HCT116 (cell line): ENCODE measurements at regions of chr2 and their contacts with region 1.

Region 1: GRCh38 chr2:58571181-58571852 is 330.2 kb upstream of the FANCL start:
- DNase-seq: peak; percentile 77
- ATAC-seq: peak; percentile 100
- H3K4me3 ChIP-seq: no peak overlapping the region
- H3K27ac ChIP-seq: no peak overlapping the region
- H3K4me1 ChIP-seq: no peaks in the 10 kb centered on the region
- H3K27me3 ChIP-seq: no peaks in the 10 kb centered on the region
- CTCF ChIP-seq: peak; percentile 70 to 78 (median 77)
- POLR2A ChIP-seq: no peak
- RAD21 ChIP-seq: peak; percentile 88

Region 2: DNA sequence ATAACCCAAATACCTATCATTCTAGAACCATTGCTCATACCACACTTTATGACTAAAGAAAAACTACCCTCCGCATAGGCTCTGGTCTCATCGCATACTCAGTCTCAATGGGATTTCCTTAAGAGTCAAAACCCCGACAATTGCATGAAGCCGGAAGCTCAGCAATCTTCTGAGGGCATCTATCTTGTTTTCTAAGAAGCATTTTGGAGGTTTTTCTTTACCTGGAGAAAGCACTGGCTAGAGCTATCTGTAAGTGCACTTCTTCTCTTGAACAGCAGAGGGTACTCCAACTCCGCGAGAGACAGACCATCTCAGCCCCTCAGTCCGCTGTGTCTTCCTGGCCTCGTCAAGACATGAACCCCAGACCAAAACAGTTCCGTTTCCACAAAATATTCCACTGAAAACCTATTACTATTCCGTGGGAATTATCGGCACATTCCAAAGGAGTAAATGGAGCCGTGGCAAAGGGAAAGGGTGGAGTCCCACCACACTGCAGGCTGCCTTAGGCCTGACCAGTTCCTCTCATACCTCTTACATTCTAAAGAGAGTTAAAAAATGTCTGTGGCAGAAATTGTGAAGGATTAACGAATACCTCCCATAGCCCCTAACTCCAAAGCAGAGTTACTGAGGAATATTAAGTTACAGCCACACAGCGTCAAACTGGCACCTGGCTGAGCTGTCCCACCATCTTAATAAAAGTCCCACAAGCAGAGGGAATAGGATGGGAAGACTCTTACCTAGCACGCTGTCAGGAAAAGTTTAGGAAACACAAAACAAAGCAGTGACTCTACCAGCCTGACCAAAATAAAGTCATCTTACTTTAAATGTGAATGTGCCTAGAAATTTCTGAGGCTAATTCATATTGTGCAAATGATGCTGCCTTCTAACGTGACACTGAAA is 850.3 kb before region 1 on chr2:
- CTCF ChIA-PET with region 1: no interaction called
- POLR2A ChIA-PET with region 1: no interaction called
- RAD21 ChIA-PET with region 1: no interaction called
- intact Hi-C with region 1: loop called (anchors 1 kb)
- DNase-seq: peak; percentile 48
- ATAC-seq: peak; percentile 99
- H3K4me3 ChIP-seq: peak overlapping the region in 1 of 2 experiments; percentile 20; a peak in 2 of 4 replicates
- H3K27ac ChIP-seq: no peak overlapping the region
- H3K4me1 ChIP-seq: peaks cover 0 to 11% of the 10 kb centered on the region in 2 experiments; a peak in 2 of 4 replicates
- H3K27me3 ChIP-seq: no peaks in the 10 kb centered on the region
- CTCF ChIP-seq: peak; percentile 56 to 90 (median 89); a peak in 5 of 6 replicates
- POLR2A ChIP-seq: no peak
- RAD21 ChIP-seq: peak; percentile 87

Region 3: DNA sequence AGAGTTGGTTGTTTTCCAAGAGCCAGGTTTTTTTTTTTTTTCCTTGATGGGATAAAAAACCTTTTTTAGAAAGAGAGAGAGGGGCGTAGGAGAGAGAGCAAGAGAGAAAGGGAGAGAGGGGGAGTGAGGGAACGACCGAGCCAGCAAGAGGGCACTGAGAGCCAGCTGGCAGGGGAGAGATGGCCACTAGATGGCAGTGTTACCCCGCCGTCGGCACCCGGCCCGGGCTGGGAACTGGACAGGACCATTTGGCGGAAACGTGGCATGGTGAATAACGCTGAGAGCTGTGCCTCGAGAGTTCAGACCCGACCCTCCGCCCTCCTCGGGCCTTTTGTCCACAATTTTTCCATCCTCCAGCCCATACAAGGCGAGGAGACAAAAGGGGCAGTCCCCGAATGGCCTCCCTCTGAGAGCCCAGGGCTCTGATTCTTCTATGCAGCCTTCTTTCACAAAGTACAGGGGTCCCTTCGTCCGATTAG is 811.5 kb before region 1 on chr2:
- CTCF ChIA-PET with region 1: interaction called, 3 read pairs
- POLR2A ChIA-PET with region 1: no interaction called
- RAD21 ChIA-PET with region 1: no interaction called
- intact Hi-C with region 1: loop called (anchors 5 kb)
- DNase-seq: peak; percentile 57
- ATAC-seq: peak; percentile 99
- H3K4me3 ChIP-seq: peak overlapping the region in 1 of 2 experiments; percentile 28; a peak in 2 of 4 replicates
- H3K27ac ChIP-seq: no peak overlapping the region
- H3K4me1 ChIP-seq: peaks cover 0 to 8% of the 10 kb centered on the region in 2 experiments; a peak in 2 of 4 replicates
- H3K27me3 ChIP-seq: no peaks in the 10 kb centered on the region
- CTCF ChIP-seq: peak; percentile 75 to 92 (median 87)
- POLR2A ChIP-seq: no peak
- RAD21 ChIP-seq: peak; percentile 96

Region 4: DNA sequence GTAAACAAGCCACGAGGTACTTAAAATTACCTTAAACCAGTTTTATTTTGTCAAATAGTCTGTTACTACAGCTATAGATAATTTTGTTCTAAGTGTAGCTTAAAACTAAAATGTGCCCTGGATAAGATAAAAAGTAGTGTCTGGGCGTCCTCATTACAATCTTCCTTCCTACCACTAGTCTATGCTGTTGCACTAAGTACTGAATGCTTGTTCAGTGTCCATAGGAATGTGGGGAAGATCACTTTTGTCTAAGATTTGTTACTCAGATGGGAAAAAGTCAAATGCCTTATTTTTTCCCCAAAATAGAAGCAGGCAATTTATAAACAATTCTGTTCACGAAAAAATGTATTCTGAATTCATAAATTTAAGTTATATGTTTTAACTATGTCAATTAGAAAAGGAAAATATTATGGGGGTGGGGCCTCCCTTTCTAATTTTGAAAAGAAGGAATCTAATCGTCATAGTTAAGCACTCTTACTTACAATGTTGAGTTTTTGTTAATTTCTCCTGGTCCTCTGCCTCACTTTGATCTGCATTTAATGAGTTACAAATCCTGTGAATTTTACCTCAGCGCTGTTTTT is 665.1 kb before region 1 on chr2:
- CTCF ChIA-PET with region 1: interaction called, 3 read pairs
- POLR2A ChIA-PET with region 1: no interaction called
- RAD21 ChIA-PET with region 1: no interaction called
- intact Hi-C with region 1: loop called (anchors 5 kb)
- DNase-seq: no peak
- ATAC-seq: peak; percentile 98
- H3K4me3 ChIP-seq: no peak overlapping the region
- H3K27ac ChIP-seq: no peak overlapping the region
- H3K4me1 ChIP-seq: no peaks in the 10 kb centered on the region
- H3K27me3 ChIP-seq: no peaks in the 10 kb centered on the region
- CTCF ChIP-seq: peak; percentile 81 to 92 (median 84)
- POLR2A ChIP-seq: no peak
- RAD21 ChIP-seq: peak; percentile 95

Region 5: GRCh38 chr2:58207189-58207588 is 364.1 kb before region 1 on chr2:
- CTCF ChIA-PET with region 1: no interaction called
- POLR2A ChIA-PET with region 1: no interaction called
- RAD21 ChIA-PET with region 1: no interaction called
- intact Hi-C with region 1: no loop called
- DNase-seq: no peak
- ATAC-seq: no peak
- H3K4me3 ChIP-seq: no peak overlapping the region
- H3K27ac ChIP-seq: no peak overlapping the region
- H3K4me1 ChIP-seq: no peaks in the 10 kb centered on the region
- H3K27me3 ChIP-seq: no peaks in the 10 kb centered on the region
- CTCF ChIP-seq: no peak
- POLR2A ChIP-seq: no peak
- RAD21 ChIP-seq: no peak

Region 6: GRCh38 chr2:58680755-58681310 is 109.5 kb after region 1 on chr2:
- CTCF ChIA-PET with region 1: interaction called, 28 read pairs
- POLR2A ChIA-PET with region 1: no interaction called
- RAD21 ChIA-PET with region 1: interaction called, 4 to 8 read pairs
- intact Hi-C with region 1: loop called (anchors 2 kb)
- DNase-seq: no peak
- ATAC-seq: no peak
- H3K4me3 ChIP-seq: no peak overlapping the region
- H3K27ac ChIP-seq: no peak overlapping the region
- H3K4me1 ChIP-seq: no peaks in the 10 kb centered on the region
- H3K27me3 ChIP-seq: no peaks in the 10 kb centered on the region
- CTCF ChIP-seq: peak in 2 of 3 experiments; percentile 31 to 43; a peak in 2 of 6 replicates
- POLR2A ChIP-seq: no peak
- RAD21 ChIP-seq: peak; percentile 32; the same call in 1 of the 2 replicates

Region 7: GRCh38 chr2:58871469-58872142 is 300.3 kb after region 1 on chr2:
- CTCF ChIA-PET with region 1: interaction called, 5 read pairs
- POLR2A ChIA-PET with region 1: no interaction called
- RAD21 ChIA-PET with region 1: no interaction called
- intact Hi-C with region 1: loop called (anchors 1 kb)
- DNase-seq: no peak
- ATAC-seq: peak; percentile 54; the same call in 1 of the 2 replicates
- H3K4me3 ChIP-seq: no peak overlapping the region
- H3K27ac ChIP-seq: no peak overlapping the region
- H3K4me1 ChIP-seq: no peaks in the 10 kb centered on the region
- H3K27me3 ChIP-seq: peaks cover 2% of the 10 kb centered on the region; the same call in 1 of the 2 replicates
- CTCF ChIP-seq: peak in 2 of 3 experiments; percentile 27 to 54; a peak in 4 of 6 replicates
- POLR2A ChIP-seq: no peak
- RAD21 ChIP-seq: peak; percentile 15; the same call in 1 of the 2 replicates

Region 8: GRCh38 chr2:60569680-60570111 is 1998.4 kb after region 1 on chr2:
- CTCF ChIA-PET with region 1: no interaction called
- POLR2A ChIA-PET with region 1: no interaction called
- RAD21 ChIA-PET with region 1: no interaction called
- intact Hi-C with region 1: loop called (anchors 10 kb)
- DNase-seq: no peak
- ATAC-seq: no peak
- H3K4me3 ChIP-seq: no peak overlapping the region
- H3K27ac ChIP-seq: no peak overlapping the region
- H3K4me1 ChIP-seq: no peaks in the 10 kb centered on the region
- H3K27me3 ChIP-seq: peaks cover 82% of the 10 kb centered on the region
- CTCF ChIP-seq: no peak
- POLR2A ChIP-seq: no peak
- RAD21 ChIP-seq: no peak